ENCODE measurements at regions of chr12 and their contacts with region 1.

Region 1: GRCh38 chr12:108562348-108563135 is at the start of gene ISCU:
- DNase-seq: peak; percentile 94
- H3K4me3 ChIP-seq: peak within 1 kb of the TSS; percentile 100
- H3K27ac ChIP-seq: peak within 1 kb of the TSS; percentile 87
- H3K27me3 ChIP-seq: no peaks in the 10 kb centered on the region
- CTCF ChIP-seq: no peak
- polyA plus RNA-seq, gene ISCU: 164 and 184 TPM in 2 replicates

Region 2: GRCh38 chr12:108576660-108577234 is 14.2 kb after region 1 on chr12:
- CTCF ChIA-PET with region 1: interaction called, 18 read pairs
- POLR2A ChIA-PET with region 1: no interaction called
- DNase-seq: no peak
- H3K4me3 ChIP-seq: no peak overlapping the region
- H3K27ac ChIP-seq: no peak overlapping the region
- H3K27me3 ChIP-seq: no peaks in the 10 kb centered on the region
- CTCF ChIP-seq: no peak

Region 3: DNA sequence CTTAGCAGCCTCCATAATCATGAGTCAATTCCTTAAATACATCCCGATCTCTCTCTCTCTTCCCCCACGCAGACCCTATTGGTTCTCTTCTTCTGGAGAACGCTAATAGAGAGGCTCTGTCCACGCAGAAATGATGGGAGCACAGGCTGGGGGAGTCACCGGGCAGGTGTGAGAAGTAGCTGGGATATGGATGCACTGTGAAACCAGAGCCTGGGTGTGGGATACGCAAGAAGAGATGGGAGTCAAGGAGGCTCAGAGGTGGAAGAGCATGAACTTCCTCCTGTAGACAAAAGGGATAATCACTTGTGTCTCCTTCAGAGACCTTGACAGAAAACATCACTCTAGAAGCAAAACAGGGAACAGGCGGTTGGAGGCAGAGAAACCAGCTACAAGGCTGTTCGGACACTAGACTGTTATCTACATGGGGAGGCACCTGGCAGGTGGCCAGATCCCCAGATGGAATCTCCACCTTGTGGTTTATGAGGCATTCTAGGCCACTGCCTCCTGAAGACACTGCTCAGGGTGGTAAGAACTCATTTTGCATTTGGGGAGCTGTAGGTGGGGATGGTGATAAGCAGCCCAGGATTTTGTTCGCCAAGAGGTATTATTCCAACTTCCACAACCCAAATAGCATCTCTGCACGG is 78.4 kb after region 1 on chr12:
- CTCF ChIA-PET with region 1: interaction called, 13 read pairs
- POLR2A ChIA-PET with region 1: no interaction called
- DNase-seq: no peak
- H3K4me3 ChIP-seq: no peak overlapping the region
- H3K27ac ChIP-seq: peak overlapping the region; percentile 11
- H3K27me3 ChIP-seq: no peaks in the 10 kb centered on the region
- CTCF ChIP-seq: no peak